ENCODE measurements at regions of chr15 and their contacts with region 1.

Region 1: GRCh38 chr15:80567721-80568157 is 127.4 kb upstream of the ABHD17C start:
- DNase-seq: peak; percentile 84 to 89
- ATAC-seq: peak; percentile 89 to 97
- H3K4me3 ChIP-seq: no peak overlapping the region
- H3K27ac ChIP-seq: no peak overlapping the region
- H3K4me1 ChIP-seq: no peaks in the 10 kb centered on the region
- CTCF ChIP-seq: peak; percentile 99
- EP300 ChIP-seq: no peak
- POLR2A ChIP-seq: no peak
- RAD21 ChIP-seq: peak; percentile 98

Region 2: GRCh38 chr15:80105595-80106450 is 461.9 kb before region 1 on chr15:
- CTCF ChIA-PET with region 1: no interaction called
- POLR2A ChIA-PET with region 1: no interaction called
- DNase-seq: no peak
- ATAC-seq: peak in 1 of 2 experiments; percentile 36; a peak in 3 of 6 replicates
- H3K4me3 ChIP-seq: no peak overlapping the region
- H3K27ac ChIP-seq: no peak overlapping the region
- H3K4me1 ChIP-seq: peaks cover 21% of the 10 kb centered on the region
- CTCF ChIP-seq: no peak
- EP300 ChIP-seq: no peak
- POLR2A ChIP-seq: no peak
- RAD21 ChIP-seq: no peak

Region 3: DNA sequence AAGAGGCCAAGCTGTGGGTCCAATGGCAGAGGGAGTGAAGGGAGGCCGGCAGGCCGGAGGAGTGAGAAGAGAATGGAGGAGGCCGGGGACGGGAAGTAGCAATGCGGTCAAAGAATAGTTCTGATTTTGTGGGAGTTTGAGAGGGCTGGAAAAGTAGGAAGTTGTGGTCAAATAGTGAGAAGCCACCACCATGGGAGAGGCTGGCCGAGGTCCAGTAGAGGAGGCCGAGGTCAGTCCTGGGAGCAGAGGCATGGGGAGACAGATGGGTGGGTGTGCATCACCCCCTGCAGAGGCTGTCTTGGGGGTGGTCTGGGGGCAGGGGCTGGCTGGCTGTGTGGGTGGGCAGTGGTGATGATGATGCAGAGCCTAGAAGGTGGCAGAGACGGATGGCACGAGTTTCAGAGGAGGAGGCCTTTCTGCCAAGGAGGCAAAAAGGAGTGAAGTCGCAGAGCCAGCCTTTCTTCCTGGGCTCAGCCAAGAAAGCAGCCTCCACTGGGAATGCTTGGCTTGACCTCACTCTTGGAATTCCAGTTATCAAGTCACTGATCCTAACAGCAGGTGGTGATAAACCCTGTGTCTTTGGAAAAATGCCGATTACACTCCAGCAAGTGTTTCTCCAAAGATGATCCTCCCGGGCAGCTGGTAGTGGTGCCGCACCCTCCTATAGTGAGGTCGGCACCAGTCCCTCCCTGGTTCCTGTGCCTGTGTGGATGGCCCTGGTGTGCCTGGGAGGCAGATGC is 106.2 kb before region 1 on chr15:
- CTCF ChIA-PET with region 1: interaction called, 77 read pairs
- POLR2A ChIA-PET with region 1: no interaction called
- DNase-seq: no peak
- ATAC-seq: no peak
- H3K4me3 ChIP-seq: no peak overlapping the region
- H3K27ac ChIP-seq: no peak overlapping the region
- H3K4me1 ChIP-seq: peaks cover 5% of the 10 kb centered on the region
- CTCF ChIP-seq: no peak
- EP300 ChIP-seq: no peak
- POLR2A ChIP-seq: no peak
- RAD21 ChIP-seq: no peak

Region 4: GRCh38 chr15:80550219-80550907 is 17.4 kb before region 1 on chr15:
- CTCF ChIA-PET with region 1: interaction called, 13 read pairs
- POLR2A ChIA-PET with region 1: no interaction called
- DNase-seq: peak in 1 of 2 experiments; percentile 32
- ATAC-seq: peak; percentile 63 to 75
- H3K4me3 ChIP-seq: no peak overlapping the region
- H3K27ac ChIP-seq: no peak overlapping the region
- H3K4me1 ChIP-seq: peaks cover 21% of the 10 kb centered on the region
- CTCF ChIP-seq: no peak
- EP300 ChIP-seq: no peak
- POLR2A ChIP-seq: no peak
- RAD21 ChIP-seq: no peak

Region 5: GRCh38 chr15:80604583-80605575 is 37.1 kb after region 1 on chr15:
- CTCF ChIA-PET with region 1: interaction called, 25 read pairs
- POLR2A ChIA-PET with region 1: no interaction called
- DNase-seq: no peak
- ATAC-seq: no peak
- H3K4me3 ChIP-seq: no peak overlapping the region
- H3K27ac ChIP-seq: no peak overlapping the region
- H3K4me1 ChIP-seq: no peaks in the 10 kb centered on the region
- CTCF ChIP-seq: no peak
- EP300 ChIP-seq: no peak
- POLR2A ChIP-seq: no peak
- RAD21 ChIP-seq: no peak

Region 6: GRCh38 chr15:80695104-80695910 is 127.6 kb after region 1 on chr15 and contains the start of gene ABHD17C:
- CTCF ChIA-PET with region 1: interaction called, 71 read pairs
- POLR2A ChIA-PET with region 1: interaction called, 7 read pairs
- DNase-seq: peak; percentile 60 to 68
- ATAC-seq: peak; percentile 73 to 84
- H3K4me3 ChIP-seq: peak within 1 kb of the TSS; percentile 79
- H3K27ac ChIP-seq: peak within 1 kb of the TSS; percentile 89 to 94
- H3K4me1 ChIP-seq: peaks cover 16% of the 10 kb centered on the region
- CTCF ChIP-seq: no peak
- EP300 ChIP-seq: no peak
- POLR2A ChIP-seq: peak; percentile 71
- RAD21 ChIP-seq: no peak
- polyA plus RNA-seq, gene ABHD17C: 23.7 and 24.9 TPM in 2 replicates

Region 7: GRCh38 chr15:80769153-80769828 is 201.6 kb after region 1 on chr15:
- CTCF ChIA-PET with region 1: interaction called, 39 read pairs
- POLR2A ChIA-PET with region 1: no interaction called
- DNase-seq: no peak
- ATAC-seq: no peak
- H3K4me3 ChIP-seq: no peak overlapping the region
- H3K27ac ChIP-seq: no peak overlapping the region
- H3K4me1 ChIP-seq: 0 out of 3 replicates have a peak, but pooled peaks cover 4% of the 10 kb centered on the region
- CTCF ChIP-seq: no peak
- EP300 ChIP-seq: no peak
- POLR2A ChIP-seq: no peak
- RAD21 ChIP-seq: no peak

Region 8: DNA sequence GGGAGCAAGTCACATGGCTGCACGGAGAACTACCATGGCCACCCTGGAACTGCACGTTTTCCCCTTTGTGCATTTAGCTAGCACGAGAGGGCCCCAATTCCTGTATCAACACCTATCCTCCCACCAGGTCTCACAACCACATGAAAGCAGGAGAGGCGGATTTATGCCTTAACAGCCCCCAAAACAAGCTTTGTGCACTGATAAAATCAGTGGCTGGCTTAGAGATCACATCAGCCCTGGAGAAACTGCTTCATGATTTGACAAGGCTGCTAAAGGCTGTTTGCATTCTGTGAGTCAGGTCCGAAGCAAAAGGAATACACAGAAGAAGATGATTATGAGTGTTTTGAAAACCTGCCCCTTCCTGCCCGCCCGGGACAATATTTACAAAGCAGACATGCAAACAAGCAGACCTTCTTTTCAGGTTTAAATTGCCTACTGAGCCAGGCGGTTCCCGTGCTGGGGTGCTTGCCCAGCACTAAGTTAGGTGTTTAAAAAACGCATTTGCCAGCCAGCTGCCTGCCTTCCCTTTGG is 237.3 kb after region 1 on chr15:
- CTCF ChIA-PET with region 1: interaction called, 13 read pairs
- POLR2A ChIA-PET with region 1: no interaction called
- DNase-seq: peak in 1 of 2 experiments; percentile 49
- ATAC-seq: peak; percentile 44 to 82; a peak in 4 of 6 replicates
- H3K4me3 ChIP-seq: no peak overlapping the region
- H3K27ac ChIP-seq: no peak overlapping the region
- H3K4me1 ChIP-seq: peaks cover 13% of the 10 kb centered on the region; the same call in 2 of the 3 replicates
- CTCF ChIP-seq: no peak
- EP300 ChIP-seq: no peak
- POLR2A ChIP-seq: no peak
- RAD21 ChIP-seq: no peak